H1 (cell line): ENCODE measurements at regions of chr6 and their contacts with region 1.

Region 1: GRCh38 chr6:158518191-158519127 is 41.4 kb upstream of the TMEM181 start:
- DNase-seq: peak in 1 of 2 experiments; percentile 69
- H3K4me3 ChIP-seq: peak overlapping the region; percentile 16 to 58 (median 42); a peak in 7 of 8 replicates
- H3K27ac ChIP-seq: no peak overlapping the region
- H3K4me1 ChIP-seq: peaks cover 0 to 5% (median 4%) of the 10 kb centered on the region in 4 experiments; a peak in 4 of 7 replicates
- H3K27me3 ChIP-seq: no peaks in the 10 kb centered on the region
- CTCF ChIP-seq: peak; percentile 52 to 96 (median 82)
- EP300 ChIP-seq: peak in 1 of 2 experiments; percentile 75; a peak in 1 of 3 replicates
- POLR2A ChIP-seq: peak in 1 of 2 experiments; percentile 66; a peak in 2 of 3 replicates
- RAD21 ChIP-seq: peak; percentile 62 to 82

Region 2: DNA sequence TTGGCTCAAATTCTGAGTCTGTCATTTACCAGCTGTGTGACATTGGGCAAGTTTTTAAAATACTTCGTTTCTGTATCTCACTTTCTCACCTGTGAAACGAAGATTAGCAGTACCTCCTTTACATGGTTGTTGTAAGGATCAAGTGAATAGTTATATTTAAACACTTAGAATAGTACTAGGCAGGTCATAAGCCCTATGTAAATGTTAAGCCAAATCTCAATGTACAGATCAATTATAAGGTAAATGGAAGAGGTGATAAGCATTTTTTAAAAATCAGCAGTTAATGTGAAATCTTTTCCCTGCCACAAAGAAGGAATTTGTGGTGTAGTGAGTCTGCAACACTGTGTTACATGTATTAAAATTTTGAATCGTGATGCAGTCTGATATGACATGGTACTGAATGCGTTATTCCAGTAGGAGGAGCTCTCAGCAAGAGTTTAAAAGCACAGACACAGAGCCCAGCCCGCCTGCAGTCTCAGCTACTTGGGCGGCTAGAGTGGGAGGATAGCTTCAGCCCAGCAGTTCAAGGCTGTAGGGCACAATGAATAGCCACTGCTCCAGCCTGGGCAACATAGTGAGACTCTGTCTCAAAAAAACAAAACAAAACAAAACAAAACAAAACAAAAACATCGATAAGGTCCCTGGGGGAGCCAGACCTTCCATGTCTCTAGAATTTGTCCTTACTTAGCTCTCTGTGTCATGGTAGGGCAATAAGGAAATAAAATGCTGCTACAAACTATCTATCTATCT is 304.4 kb before region 1 on chr6:
- CTCF ChIA-PET with region 1: interaction called, 13 read pairs
- POLR2A ChIA-PET with region 1: no interaction called
- DNase-seq: no peak
- H3K4me3 ChIP-seq: no peak overlapping the region
- H3K27ac ChIP-seq: no peak overlapping the region
- H3K4me1 ChIP-seq: no peaks in the 10 kb centered on the region
- H3K27me3 ChIP-seq: no peaks in the 10 kb centered on the region
- CTCF ChIP-seq: peak; percentile 38 to 86 (median 79)
- EP300 ChIP-seq: no peak
- POLR2A ChIP-seq: no peak
- RAD21 ChIP-seq: peak; percentile 93 to 94

Region 3: GRCh38 chr6:158226655-158227512 is 291.6 kb before region 1 on chr6:
- CTCF ChIA-PET with region 1: interaction called, 10 read pairs
- POLR2A ChIA-PET with region 1: no interaction called
- DNase-seq: no peak
- H3K4me3 ChIP-seq: no peak overlapping the region
- H3K27ac ChIP-seq: no peak overlapping the region
- H3K4me1 ChIP-seq: peaks cover 0 to 2% (median 0%) of the 10 kb centered on the region in 4 experiments; a peak in 1 of 7 replicates
- H3K27me3 ChIP-seq: no peaks in the 10 kb centered on the region; a peak in 1 of 7 replicates
- CTCF ChIP-seq: no peak
- EP300 ChIP-seq: no peak
- POLR2A ChIP-seq: no peak
- RAD21 ChIP-seq: no peak; a peak in 1 of 4 replicates

Region 4: GRCh38 chr6:158422629-158423238 is 95.7 kb before region 1 on chr6:
- CTCF ChIA-PET with region 1: no interaction called
- POLR2A ChIA-PET with region 1: no interaction called
- DNase-seq: no peak
- H3K4me3 ChIP-seq: no peak overlapping the region
- H3K27ac ChIP-seq: no peak overlapping the region
- H3K4me1 ChIP-seq: no peaks in the 10 kb centered on the region
- H3K27me3 ChIP-seq: no peaks in the 10 kb centered on the region
- CTCF ChIP-seq: no peak
- EP300 ChIP-seq: no peak
- POLR2A ChIP-seq: no peak
- RAD21 ChIP-seq: no peak

Region 5: GRCh38 chr6:158536084-158536890 is 17.8 kb after region 1 on chr6:
- CTCF ChIA-PET with region 1: interaction called, 13 read pairs
- POLR2A ChIA-PET with region 1: interaction called, 4 read pairs
- DNase-seq: peak in 1 of 2 experiments; percentile 92
- H3K4me3 ChIP-seq: peak overlapping the region; percentile 77 to 96 (median 80)
- H3K27ac ChIP-seq: peak overlapping the region; percentile 20; the same call in 1 of the 2 replicates
- H3K4me1 ChIP-seq: peaks cover 2 to 3% (median 2%) of the 10 kb centered on the region in 4 experiments; a peak in 2 of 7 replicates
- H3K27me3 ChIP-seq: peaks cover 0 to 3% (median 1%) of the 10 kb centered on the region in 4 experiments; a peak in 3 of 7 replicates
- CTCF ChIP-seq: no peak
- EP300 ChIP-seq: no peak
- POLR2A ChIP-seq: no peak; a peak in 1 of 3 replicates
- RAD21 ChIP-seq: no peak; a peak in 1 of 4 replicates

Region 6: GRCh38 chr6:158605266-158605878 is 86.9 kb after region 1 on chr6:
- CTCF ChIA-PET with region 1: interaction called, 13 read pairs
- POLR2A ChIA-PET with region 1: no interaction called
- DNase-seq: peak; percentile 39 to 86
- H3K4me3 ChIP-seq: no peak overlapping the region
- H3K27ac ChIP-seq: no peak overlapping the region
- H3K4me1 ChIP-seq: no peaks in the 10 kb centered on the region
- H3K27me3 ChIP-seq: no peaks in the 10 kb centered on the region
- CTCF ChIP-seq: peak; percentile 43 to 84 (median 73)
- EP300 ChIP-seq: no peak
- POLR2A ChIP-seq: no peak
- RAD21 ChIP-seq: peak; percentile 72 to 78